ENCODE measurements at regions of chr5 and their contacts with region 1.

Region 1: DNA sequence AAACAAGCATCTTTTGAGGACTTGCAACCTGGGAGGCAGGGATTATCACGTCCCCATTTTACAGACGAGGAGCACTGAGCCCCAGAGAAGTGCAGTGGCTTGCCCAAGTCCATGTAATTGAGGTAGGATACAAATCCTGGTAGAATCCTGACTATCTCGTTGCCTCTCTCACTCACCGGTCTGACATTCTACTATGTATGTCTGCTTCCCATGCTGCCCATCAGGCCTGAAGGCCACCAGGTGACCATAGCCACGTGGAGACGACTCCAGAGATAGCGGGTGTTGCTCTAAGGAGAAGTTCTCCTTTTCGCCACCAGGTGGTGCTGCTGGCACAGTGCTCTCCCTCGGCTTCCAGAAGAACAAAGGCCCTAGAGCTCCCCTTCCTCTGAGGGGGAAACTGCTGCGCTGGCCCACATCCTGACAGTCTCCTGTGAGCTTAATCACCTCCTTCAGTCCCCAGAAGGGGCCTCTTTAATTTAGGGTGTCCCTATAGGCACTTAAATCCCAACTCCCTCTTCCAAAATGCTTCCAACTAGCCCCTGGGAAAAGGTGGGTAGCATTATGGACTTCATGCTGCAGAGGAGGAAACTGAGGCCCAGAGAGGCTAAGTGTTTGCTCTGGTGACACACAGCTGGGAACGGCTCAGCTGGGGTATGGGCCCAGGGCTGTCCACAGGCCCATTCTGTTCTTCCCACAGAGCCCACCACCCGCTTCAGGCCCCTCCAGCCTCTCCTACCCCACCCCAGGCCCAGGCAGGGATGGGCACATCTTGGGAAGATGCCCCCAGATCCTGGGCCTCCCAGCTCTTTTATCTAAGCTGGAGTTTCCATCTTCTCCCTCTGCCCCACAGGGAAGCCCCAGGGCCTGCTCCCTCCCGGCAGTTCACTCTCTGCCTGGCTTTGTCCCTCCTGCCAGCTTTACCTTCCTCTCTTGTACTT is 6.4 kb downstream of the SLC34A1 start:
- DNase-seq: peak; percentile 76 to 94 (median 88)
- ATAC-seq: peak; percentile 78
- H3K4me3 ChIP-seq: no peak overlapping the region
- H3K4me3 Mint-ChIP-seq: peak overlapping the region; percentile 55
- H3K27ac ChIP-seq: peak overlapping the region in 1 of 2 experiments; percentile 85
- H3K27ac Mint-ChIP-seq: peak overlapping the region; percentile 90
- H3K4me1 ChIP-seq: peaks cover 43% of the 10 kb centered on the region
- H3K4me1 Mint-ChIP-seq: peaks cover 35% of the 10 kb centered on the region
- H3K27me3 ChIP-seq: no peaks in the 10 kb centered on the region
- H3K27me3 Mint-ChIP-seq: no peaks in the 10 kb centered on the region
- CTCF ChIP-seq: peak; percentile 87

Region 2: DNA sequence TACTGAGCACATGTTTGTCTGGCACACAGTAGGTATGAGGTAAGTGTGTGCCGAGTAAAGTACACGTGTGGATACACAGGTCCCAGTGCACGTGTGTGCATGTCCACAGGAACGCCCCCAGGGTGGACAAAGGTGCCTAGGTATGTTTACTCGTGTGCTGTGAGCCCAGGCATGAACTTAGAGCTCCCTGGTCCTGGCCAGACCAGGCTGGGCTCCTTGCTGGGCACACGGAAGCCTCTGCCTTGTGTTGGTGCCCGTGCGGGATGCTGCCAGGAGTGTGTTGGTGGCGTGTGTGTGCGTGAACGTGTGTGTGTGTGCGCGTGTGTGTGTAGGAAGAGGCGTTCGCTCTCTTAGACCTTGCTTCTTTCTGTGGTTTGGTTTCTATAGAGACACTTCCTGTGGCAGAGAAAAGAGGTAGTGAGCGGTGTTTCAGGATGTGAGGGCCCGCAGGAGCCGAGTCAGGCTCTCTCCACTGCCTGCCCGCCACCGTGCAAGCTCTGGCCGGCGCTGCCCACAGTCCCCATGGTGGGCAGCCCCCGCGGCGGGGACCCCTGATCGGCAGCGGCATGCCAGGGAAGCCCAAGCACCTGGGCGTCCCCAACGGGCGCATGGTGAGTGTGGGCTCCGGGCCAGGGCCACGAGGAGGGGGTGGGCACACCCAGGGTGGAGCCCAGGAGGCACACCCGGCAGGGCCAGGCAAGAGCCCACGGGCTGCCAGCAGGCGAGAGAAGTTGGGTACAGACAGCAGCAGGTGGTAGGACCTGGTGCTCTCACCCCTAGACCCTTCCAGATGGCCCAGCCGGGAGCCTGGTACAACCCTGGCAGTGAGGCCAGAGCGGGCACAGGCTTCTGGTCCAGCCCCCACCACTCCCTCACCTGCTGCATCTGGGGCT is 32.9 kb before region 1 on chr5 and contains the start of gene RGS14:
- CTCF ChIA-PET with region 1: interaction called, 14 read pairs
- POLR2A ChIA-PET with region 1: interaction called, 3 read pairs
- intact Hi-C with region 1: loop called in 1 of 2 experiments (anchors 1 kb)
- DNase-seq: peak; percentile 36 to 91 (median 75)
- ATAC-seq: peak; percentile 87
- H3K4me3 ChIP-seq: peak within 1 kb of the TSS; percentile 90 to 95
- H3K4me3 Mint-ChIP-seq: peak within 1 kb of the TSS; percentile 84
- H3K27ac ChIP-seq: peak within 1 kb of the TSS; percentile 67 to 74
- H3K27ac Mint-ChIP-seq: peak within 1 kb of the TSS; percentile 94
- H3K4me1 ChIP-seq: peaks cover 67% of the 10 kb centered on the region
- H3K4me1 Mint-ChIP-seq: peaks cover 77% of the 10 kb centered on the region
- H3K27me3 ChIP-seq: no peaks in the 10 kb centered on the region
- H3K27me3 Mint-ChIP-seq: no peaks in the 10 kb centered on the region
- CTCF ChIP-seq: no peak
- total RNA-seq, gene RGS14: 22.7 to 23.5 TPM

Region 3: GRCh38 chr5:177403792-177404640 is 13.4 kb after region 1 on chr5:
- CTCF ChIA-PET with region 1: interaction called, 220 read pairs
- POLR2A ChIA-PET with region 1: interaction called, 45 read pairs
- intact Hi-C with region 1: loop called (anchors 1 kb)
- DNase-seq: peak; percentile 74 to 94 (median 85)
- ATAC-seq: peak; percentile 73
- H3K4me3 ChIP-seq: peak overlapping the region; percentile 52 to 72
- H3K4me3 Mint-ChIP-seq: peak overlapping the region; percentile 79
- H3K27ac ChIP-seq: peak overlapping the region in 1 of 2 experiments; percentile 59
- H3K27ac Mint-ChIP-seq: no peak overlapping the region
- H3K4me1 ChIP-seq: peaks cover 44% of the 10 kb centered on the region
- H3K4me1 Mint-ChIP-seq: peaks cover 38% of the 10 kb centered on the region
- H3K27me3 ChIP-seq: peaks cover 0 to 2% of the 10 kb centered on the region in 2 experiments
- H3K27me3 Mint-ChIP-seq: no peaks in the 10 kb centered on the region
- CTCF ChIP-seq: peak; percentile 52

Region 4: DNA sequence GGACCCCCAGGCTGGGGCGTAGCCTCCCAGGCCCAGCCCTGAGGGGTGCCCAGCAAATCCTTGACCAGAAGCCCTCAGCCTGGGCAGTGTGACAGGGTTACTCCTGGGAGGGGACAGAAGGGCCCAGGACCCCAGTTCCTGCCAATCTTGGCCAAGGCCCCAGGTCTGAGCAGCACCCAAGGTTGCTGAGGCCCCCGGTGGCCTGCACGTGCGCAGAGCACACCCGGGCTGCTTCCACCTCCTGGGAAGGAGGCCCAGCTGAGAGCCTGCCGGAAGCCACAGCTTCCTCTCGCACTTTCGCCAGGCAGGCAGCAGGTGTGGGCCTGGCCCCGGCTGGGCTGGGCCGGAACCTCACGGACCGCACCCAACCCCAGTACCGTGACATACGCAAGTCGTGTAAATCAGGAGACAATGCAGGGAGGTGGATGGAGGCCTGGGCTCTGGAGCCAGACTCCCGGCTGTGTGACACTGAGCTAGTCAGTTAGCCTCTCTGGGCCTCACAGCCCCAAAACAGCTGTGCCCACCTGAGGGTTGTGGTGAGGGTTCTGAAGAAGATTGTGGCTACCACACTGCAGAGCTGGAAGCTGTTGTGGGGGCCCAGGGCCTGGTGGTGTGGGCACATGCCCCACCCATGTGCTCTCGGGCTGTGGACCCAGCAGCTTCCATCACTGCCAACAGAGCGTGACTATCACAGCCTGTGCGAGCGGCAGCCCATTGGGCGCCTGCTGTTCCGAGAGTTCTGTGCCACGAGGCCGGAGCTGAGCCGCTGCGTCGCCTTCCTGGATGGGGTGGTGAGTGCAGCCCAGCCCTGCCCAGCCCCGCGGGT is 40.9 kb after region 1 on chr5:
- CTCF ChIA-PET with region 1: interaction called, 20 read pairs
- POLR2A ChIA-PET with region 1: interaction called, 13 read pairs
- intact Hi-C with region 1: loop called in 1 of 2 experiments (anchors 1 kb)
- DNase-seq: peak in 8 of 9 experiments; percentile 59 to 93 (median 78)
- ATAC-seq: peak; percentile 44
- H3K4me3 ChIP-seq: peak overlapping the region; percentile 37 to 98
- H3K4me3 Mint-ChIP-seq: peak overlapping the region; percentile 91
- H3K27ac ChIP-seq: peak overlapping the region; percentile 69 to 89
- H3K27ac Mint-ChIP-seq: peak overlapping the region; percentile 91
- H3K4me1 ChIP-seq: peaks cover 91% of the 10 kb centered on the region
- H3K4me1 Mint-ChIP-seq: peaks cover 66% of the 10 kb centered on the region
- H3K27me3 ChIP-seq: no peaks in the 10 kb centered on the region
- H3K27me3 Mint-ChIP-seq: no peaks in the 10 kb centered on the region
- CTCF ChIP-seq: no peak

Region 5: DNA sequence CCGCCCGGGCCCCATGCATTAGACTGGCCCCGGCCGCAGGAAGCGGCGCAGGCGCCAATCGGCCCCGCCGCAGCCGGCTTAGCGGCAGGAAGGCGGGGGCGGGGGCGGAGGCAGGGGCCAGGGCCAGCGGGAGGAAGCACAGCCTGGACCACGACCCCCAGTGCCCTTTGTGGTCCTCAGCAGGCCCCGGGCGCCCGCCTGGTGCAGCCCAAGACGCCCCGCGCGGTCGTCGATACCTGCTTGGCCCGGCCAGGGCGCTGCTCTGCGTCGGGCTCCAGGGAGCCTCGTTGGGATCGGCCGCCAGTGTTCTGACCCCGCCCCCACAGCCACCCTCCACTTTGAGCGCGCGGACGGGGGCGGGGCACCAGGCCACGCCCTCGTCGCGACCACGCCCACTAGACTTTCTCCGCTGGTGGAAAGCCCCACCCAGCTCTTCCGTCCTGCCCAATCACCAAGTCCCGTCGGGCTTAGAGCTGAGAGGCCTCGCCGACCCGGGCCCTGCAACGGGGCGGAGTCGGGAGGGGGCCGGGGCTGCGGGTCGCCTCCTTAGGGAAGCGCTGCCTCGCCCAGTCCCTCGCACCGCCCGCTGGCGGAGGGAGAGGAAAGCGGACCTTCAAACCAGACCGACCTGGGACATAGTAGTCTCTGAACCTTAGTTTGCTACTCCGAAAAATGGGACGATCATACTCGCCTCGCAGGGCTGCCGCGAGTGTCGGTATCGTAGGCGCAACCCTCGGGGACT is 106.8 kb after region 1 on chr5 and contains the start of gene PDLIM7:
- CTCF ChIA-PET with region 1: interaction called, 202 read pairs
- POLR2A ChIA-PET with region 1: interaction called, 6 read pairs
- intact Hi-C with region 1: loop called (anchors 1 kb)
- DNase-seq: peak; percentile 88 to 97 (median 93)
- ATAC-seq: peak; percentile 88
- H3K4me3 ChIP-seq: peak within 1 kb of the TSS; percentile 64 to 80
- H3K4me3 Mint-ChIP-seq: peak within 1 kb of the TSS; percentile 82
- H3K27ac ChIP-seq: peak within 1 kb of the TSS; percentile 18 to 20
- H3K27ac Mint-ChIP-seq: no peak within 1 kb of the TSS
- H3K4me1 ChIP-seq: peaks cover 27% of the 10 kb centered on the region
- H3K4me1 Mint-ChIP-seq: peaks cover 30% of the 10 kb centered on the region
- H3K27me3 ChIP-seq: no peaks in the 10 kb centered on the region
- H3K27me3 Mint-ChIP-seq: no peaks in the 10 kb centered on the region
- CTCF ChIP-seq: no peak
- total RNA-seq, gene PDLIM7: 6.6 to 7.1 TPM

Measured in CD8-positive, alpha-beta T cell (primary cell).